ENCODE measurements at regions of chr6 and their contacts with region 1.

Region 1: DNA sequence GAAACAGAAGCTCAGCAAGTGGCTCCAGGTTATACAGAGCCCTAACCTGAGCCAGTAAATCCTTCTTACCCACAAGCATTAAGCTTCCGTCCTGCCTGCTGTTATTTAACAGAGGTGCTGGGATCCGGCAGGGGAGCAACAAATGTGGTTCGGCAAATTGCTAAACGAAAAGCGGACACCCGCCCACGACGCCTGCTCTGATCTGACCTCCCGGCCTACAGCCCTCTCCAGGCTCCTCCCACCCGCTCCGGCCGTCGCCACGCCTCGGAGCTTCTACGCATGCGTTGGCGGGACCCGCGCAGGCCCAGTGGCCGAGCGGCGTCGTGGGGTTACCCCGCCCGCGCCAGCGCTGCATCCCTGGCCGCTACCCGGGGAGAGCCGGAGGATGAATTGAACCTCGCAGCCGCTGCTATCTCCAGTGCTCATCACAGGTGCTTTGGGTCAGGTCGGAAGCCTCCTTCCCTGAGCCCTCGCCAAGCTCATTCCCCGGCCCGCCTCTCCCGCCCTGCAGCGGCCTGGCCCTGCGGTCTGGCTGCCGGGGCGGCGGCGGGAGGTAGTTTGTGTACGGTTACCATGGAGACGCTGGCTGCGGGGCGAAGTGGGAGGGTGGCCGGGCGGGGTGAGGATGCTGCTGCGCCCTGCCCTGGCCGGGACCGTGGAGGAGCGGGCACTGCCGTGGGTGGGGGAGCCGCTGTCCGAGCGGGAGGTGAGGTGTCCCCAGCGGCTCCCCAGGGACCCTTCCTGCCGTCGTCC is at the start of gene ARMC2:
- DNase-seq: peak; percentile 81
- H3K4me3 Mint-ChIP-seq: peak within 1 kb of the TSS; percentile 82
- H3K27ac Mint-ChIP-seq: peak within 1 kb of the TSS; percentile 80
- H3K4me1 Mint-ChIP-seq: peaks cover 24% of the 10 kb centered on the region
- H3K27me3 Mint-ChIP-seq: peaks cover 10% of the 10 kb centered on the region
- total RNA-seq, gene ARMC2: 10.0 to 10.2 TPM

Region 2: GRCh38 chr6:108835218-108835850 is 13.0 kb before region 1 on chr6:
- CTCF ChIA-PET with region 1: interaction called, 17 read pairs
- POLR2A ChIA-PET with region 1: interaction called, 5 read pairs
- DNase-seq: peak; percentile 87
- H3K4me3 Mint-ChIP-seq: no peak overlapping the region
- H3K27ac Mint-ChIP-seq: no peak overlapping the region
- H3K4me1 Mint-ChIP-seq: peaks cover 39% of the 10 kb centered on the region
- H3K27me3 Mint-ChIP-seq: peaks cover 2% of the 10 kb centered on the region

Region 3: DNA sequence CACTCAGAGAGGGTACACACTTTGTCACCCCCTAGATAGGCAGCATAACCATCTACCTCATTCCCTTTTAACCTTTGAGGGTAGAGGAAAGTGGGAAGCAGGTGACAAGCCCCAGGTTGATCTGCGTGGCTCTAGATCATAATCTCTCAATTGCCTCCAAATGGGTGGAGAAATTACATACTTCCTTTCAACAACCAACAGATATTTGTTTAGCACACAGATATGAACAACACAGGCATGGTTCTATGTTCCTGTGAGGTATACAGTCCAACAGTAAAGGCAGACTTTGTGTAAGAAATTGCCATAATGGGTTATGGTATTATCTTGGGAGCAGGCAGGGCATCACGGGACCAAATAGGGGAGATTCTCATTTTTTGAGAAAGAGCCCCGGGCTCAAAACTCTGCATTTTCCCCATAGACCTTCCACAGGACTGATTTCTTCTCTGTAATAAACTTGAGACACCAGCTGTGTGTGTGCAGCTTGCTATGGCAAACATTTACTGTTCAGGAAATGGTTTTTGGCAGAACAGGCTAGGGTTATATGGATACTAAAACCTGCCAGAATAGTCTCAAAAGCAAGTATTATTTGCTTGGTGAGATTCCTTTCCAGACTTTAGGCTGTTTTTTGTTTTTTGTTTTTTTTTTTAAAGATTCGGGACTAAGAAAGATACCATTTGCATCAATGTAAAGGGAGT is 407.8 kb after region 1 on chr6:
- CTCF ChIA-PET with region 1: no interaction called
- POLR2A ChIA-PET with region 1: no interaction called
- DNase-seq: no peak
- H3K4me3 Mint-ChIP-seq: no peak overlapping the region
- H3K27ac Mint-ChIP-seq: no peak overlapping the region
- H3K4me1 Mint-ChIP-seq: no peaks in the 10 kb centered on the region
- H3K27me3 Mint-ChIP-seq: no peaks in the 10 kb centered on the region

Region 4: DNA sequence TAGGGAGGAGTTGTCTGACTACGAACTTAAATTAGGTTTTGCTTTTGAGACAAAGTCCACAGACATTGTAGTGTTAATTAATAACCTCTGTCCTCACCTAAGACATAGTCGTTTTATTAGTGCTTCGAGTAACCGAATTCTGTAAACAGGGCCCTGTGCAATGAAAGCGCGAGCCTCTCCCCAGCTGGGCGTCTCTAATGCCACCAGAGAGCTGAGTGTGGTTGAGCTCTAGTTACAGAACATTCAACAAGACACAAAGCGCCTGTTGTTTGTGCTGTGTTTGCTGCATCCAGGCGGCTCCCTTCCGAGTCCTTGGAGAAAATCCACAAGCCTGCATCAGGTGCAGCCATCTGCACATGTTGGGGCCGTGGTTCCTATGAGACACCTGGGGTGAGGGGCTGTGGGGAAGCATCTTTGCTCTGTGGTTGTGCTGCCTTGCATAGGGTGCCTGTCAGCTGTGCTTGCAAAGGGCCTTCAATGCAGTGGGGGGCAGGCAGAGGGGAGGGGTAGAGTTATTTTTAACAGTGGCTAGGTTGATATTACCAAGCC is 470.1 kb after region 1 on chr6:
- CTCF ChIA-PET with region 1: no interaction called
- POLR2A ChIA-PET with region 1: no interaction called
- DNase-seq: no peak
- H3K4me3 Mint-ChIP-seq: no peak overlapping the region
- H3K27ac Mint-ChIP-seq: no peak overlapping the region
- H3K4me1 Mint-ChIP-seq: peaks cover 11% of the 10 kb centered on the region
- H3K27me3 Mint-ChIP-seq: no peaks in the 10 kb centered on the region